Activated CD4-positive, alpha-beta memory T cell treated with anti-CD3 and anti-CD28 coated beads for 36 hours (primary cell): ENCODE measurements at regions of chr19 and their contacts with region 1.

Region 1: DNA sequence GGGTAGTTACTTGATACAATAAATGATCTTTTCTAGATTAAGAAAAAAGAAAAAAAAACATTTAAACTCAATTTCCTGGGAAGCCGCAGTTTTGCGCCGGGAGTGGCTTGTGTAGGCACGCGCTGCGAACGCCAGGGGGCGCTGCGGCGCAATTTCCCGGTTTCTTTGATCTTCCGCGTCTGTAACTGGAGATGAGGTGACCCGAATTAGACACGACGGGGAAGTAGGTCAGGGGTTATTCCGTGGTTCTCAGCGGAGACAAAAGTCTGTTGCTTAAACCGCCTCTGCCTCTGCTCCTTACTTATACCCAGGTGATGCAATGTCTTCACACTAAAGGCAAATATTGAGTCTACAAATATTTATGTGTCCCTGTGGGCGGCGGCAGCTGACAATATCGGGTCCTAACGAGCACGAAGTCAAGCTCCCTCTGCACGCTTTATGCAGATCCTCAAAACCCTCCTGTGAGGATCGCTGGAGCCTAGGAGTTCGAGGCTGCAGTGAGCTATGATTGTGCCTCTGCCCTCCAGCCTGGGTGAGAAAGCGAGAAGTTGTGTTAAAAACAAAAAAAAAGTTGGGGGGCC is 15.2 kb downstream of the STXBP2 start:
- DNase-seq: peak; percentile 92
- H3K4me3 Mint-ChIP-seq: peak overlapping the region; percentile 49
- H3K27ac Mint-ChIP-seq: peak overlapping the region; percentile 49
- H3K4me1 Mint-ChIP-seq: peaks cover 12% of the 10 kb centered on the region
- H3K27me3 Mint-ChIP-seq: no peaks in the 10 kb centered on the region

Region 2: DNA sequence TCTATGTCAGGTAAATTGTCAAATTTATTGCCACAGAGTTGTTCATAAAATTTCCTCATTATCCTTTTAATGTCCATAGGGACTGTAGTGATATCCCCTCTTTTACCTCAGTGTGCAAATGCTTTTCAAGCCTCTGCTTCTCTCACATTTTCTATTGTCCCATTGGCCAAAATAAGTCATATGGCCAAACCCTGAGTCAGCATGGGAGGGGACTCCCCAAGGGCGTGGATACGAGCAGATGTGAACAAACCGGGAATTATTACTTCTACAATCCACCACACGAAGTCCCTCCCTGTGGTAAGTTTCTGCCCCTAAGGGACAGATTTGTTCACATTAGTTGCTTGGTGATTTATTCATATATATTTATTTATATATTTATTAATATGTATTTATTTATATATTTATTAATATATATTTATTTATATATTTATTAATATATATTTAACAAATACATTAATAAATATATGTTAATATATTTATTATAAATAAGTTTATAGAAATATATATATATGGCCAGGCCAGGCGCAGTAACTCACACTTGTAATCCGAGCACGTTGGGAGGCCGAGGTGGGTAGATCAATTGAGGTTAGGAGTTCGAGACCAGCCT is 76.6 kb before region 1 on chr19:
- CTCF ChIA-PET with region 1: no interaction called
- POLR2A ChIA-PET with region 1: no interaction called
- intact Hi-C with region 1: no loop called
- DNase-seq: peak; percentile 18
- H3K4me3 Mint-ChIP-seq: no peak overlapping the region
- H3K27ac Mint-ChIP-seq: no peak overlapping the region
- H3K4me1 Mint-ChIP-seq: no peaks in the 10 kb centered on the region
- H3K27me3 Mint-ChIP-seq: peaks cover 7% of the 10 kb centered on the region

Region 3: DNA sequence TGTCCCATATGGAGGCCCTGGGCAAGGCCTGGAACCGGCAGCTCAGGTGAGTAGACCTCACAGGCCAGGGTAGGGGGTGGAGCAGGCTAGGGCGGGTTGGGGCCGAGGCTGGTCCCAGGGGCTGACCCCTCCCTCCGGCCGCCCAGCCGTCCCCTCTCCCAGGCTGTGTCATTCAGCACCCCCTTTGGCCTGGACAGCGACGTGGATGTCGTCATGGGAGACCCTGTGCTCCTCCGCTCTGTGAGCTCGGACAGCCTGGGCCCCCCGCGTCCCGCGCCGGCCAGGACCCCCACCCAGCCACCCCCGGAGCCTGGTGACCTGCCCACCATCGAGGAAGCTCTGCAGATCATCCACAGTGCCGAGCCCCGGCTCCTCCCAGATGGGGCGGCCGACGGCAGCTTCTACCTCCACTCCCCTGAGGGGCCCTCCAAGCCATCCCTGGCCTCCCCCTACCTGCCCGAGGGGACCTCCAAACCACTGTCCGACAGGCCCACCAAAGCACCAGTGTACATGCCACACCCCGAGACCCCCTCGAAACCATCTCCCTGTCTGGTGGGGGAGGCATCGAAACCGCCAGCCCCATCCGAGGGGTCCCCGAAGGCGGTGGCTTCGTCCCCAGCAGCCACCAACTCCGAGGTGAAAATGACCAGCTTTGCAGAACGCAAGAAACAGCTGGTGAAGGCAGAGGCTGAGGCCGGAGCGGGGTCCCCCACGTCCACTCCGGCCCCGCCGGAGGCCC is 40.4 kb before region 1 on chr19:
- CTCF ChIA-PET with region 1: no interaction called
- POLR2A ChIA-PET with region 1: no interaction called
- intact Hi-C with region 1: no loop called
- DNase-seq: no peak
- H3K4me3 Mint-ChIP-seq: no peak overlapping the region
- H3K27ac Mint-ChIP-seq: no peak overlapping the region
- H3K4me1 Mint-ChIP-seq: no peaks in the 10 kb centered on the region
- H3K27me3 Mint-ChIP-seq: no peaks in the 10 kb centered on the region

Region 4: GRCh38 chr19:7772752-7773291 is 120.7 kb after region 1 on chr19:
- CTCF ChIA-PET with region 1: no interaction called
- POLR2A ChIA-PET with region 1: no interaction called
- intact Hi-C with region 1: no loop called
- DNase-seq: peak; percentile 63
- H3K4me3 Mint-ChIP-seq: peak overlapping the region; percentile 41
- H3K27ac Mint-ChIP-seq: peak overlapping the region; percentile 61
- H3K4me1 Mint-ChIP-seq: peaks cover 18% of the 10 kb centered on the region
- H3K27me3 Mint-ChIP-seq: peaks cover 34% of the 10 kb centered on the region

Region 5: DNA sequence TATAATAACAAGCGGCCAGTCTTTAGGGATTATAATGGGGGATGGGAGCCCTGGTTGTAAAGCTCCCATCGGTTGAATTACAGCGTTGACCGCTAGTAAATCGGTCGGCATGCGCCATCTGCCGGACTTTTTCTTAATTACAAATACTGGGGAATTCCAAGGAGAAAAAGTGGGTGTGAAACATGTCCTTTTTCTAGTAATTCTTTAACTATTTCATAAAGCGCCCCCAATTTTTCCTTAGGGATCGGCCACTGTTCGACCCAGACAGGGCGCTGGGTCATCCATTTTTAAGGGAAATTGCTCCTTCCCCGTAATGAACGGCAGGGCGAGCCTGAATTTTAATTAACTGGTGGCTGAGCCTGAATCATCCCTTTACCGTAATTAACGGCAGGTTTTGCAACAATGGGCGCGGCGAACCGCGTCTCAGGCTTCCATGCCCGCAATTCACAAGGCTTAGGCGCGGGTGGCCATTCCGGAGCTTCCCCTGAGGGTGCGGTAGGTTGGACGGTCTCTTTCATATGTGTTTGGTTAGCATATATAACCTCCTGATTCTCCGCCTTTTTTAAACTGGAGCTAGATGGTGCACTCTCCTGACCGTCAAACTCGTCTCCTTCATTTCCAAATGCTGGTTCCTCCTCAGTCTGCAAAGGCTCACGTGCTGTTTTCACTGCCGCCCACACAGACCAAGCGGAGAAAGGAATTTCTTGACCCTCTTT is 147.6 kb after region 1 on chr19:
- CTCF ChIA-PET with region 1: interaction called, 46 read pairs
- POLR2A ChIA-PET with region 1: no interaction called
- intact Hi-C with region 1: loop called (anchors 1 kb)
- DNase-seq: peak; percentile 69
- H3K4me3 Mint-ChIP-seq: peak overlapping the region; percentile 39
- H3K27ac Mint-ChIP-seq: no peak overlapping the region
- H3K4me1 Mint-ChIP-seq: peaks cover 7% of the 10 kb centered on the region
- H3K27me3 Mint-ChIP-seq: peaks cover 25% of the 10 kb centered on the region